Activated CD8-positive, alpha-beta T cell treated with anti-CD3 and anti-CD28 coated beads, Interleukin-2, amount 10 ng/mL, durations not matched to agents 7 days and 5 days (primary cell): ENCODE measurements at regions of chr20 and their contacts with region 1.

Region 1: GRCh38 chr20:9407805-9408421 is 106.5 kb upstream of the LAMP5 start:
- DNase-seq: peak; percentile 69
- ATAC-seq: peak; percentile 70
- H3K4me3 Mint-ChIP-seq: no peak overlapping the region
- H3K27ac Mint-ChIP-seq: no peak overlapping the region
- H3K4me1 Mint-ChIP-seq: no peaks in the 10 kb centered on the region
- H3K27me3 Mint-ChIP-seq: no peaks in the 10 kb centered on the region

Region 2: DNA sequence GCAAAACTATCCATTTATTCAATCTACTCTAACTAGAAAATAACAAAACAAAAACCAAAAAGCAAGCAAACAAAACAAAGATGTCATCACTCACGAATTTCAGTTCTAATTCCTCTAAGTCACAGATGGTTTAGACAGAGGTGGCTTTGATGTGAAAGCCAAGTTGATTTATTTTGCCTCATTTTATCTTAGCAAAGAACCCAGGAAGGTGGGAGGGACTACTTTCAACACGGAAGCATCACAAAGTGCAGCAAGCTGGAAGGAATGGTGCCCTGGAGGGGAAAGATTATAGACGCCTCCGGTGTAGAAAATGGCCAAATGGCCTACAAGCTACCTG is 194.9 kb after region 1 on chr20:
- CTCF ChIA-PET with region 1: interaction called, 10 read pairs
- POLR2A ChIA-PET with region 1: no interaction called
- DNase-seq: no peak
- ATAC-seq: no peak
- H3K4me3 Mint-ChIP-seq: no peak overlapping the region
- H3K27ac Mint-ChIP-seq: no peak overlapping the region
- H3K4me1 Mint-ChIP-seq: no peaks in the 10 kb centered on the region
- H3K27me3 Mint-ChIP-seq: no peaks in the 10 kb centered on the region

Region 3: GRCh38 chr20:9609887-9610502 is 202.1 kb after region 1 on chr20:
- CTCF ChIA-PET with region 1: interaction called, 72 read pairs
- POLR2A ChIA-PET with region 1: no interaction called
- DNase-seq: peak; percentile 70
- ATAC-seq: no peak
- H3K4me3 Mint-ChIP-seq: no peak overlapping the region
- H3K27ac Mint-ChIP-seq: no peak overlapping the region
- H3K4me1 Mint-ChIP-seq: no peaks in the 10 kb centered on the region
- H3K27me3 Mint-ChIP-seq: no peaks in the 10 kb centered on the region

Region 4: GRCh38 chr20:9616833-9617489 is 209.0 kb after region 1 on chr20:
- CTCF ChIA-PET with region 1: interaction called, 72 read pairs
- POLR2A ChIA-PET with region 1: no interaction called
- DNase-seq: peak; percentile 63
- ATAC-seq: no peak
- H3K4me3 Mint-ChIP-seq: no peak overlapping the region
- H3K27ac Mint-ChIP-seq: no peak overlapping the region
- H3K4me1 Mint-ChIP-seq: no peaks in the 10 kb centered on the region
- H3K27me3 Mint-ChIP-seq: no peaks in the 10 kb centered on the region